ENCODE measurements at regions of chr10 and their contacts with region 1.

Region 1: DNA sequence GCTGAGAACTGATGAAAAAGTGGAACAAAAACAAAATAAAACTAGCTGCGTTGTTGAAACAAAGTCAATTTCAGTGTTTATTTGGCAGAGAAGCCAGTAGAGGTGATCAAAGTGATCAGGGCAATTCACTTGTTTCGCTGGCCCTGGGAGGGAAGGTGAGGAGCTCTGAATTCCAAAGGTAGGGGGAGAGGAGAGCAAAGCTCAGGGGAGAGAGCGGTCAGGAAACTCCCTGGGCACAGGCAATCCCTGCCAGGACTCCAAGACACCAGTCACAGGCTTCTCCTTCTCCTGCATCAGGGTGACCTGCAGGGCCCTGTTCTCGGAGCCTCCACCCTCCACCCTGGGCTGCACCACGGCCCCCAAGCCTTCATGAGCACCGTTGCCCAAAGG is 6.8 kb upstream of the KIAA1217 start:
- DNase-seq: peak; percentile 67
- ATAC-seq: peak; percentile 93
- H3K4me3 ChIP-seq: peak overlapping the region; percentile 39 to 67 (median 48); a peak in 5 of 6 replicates
- H3K27ac ChIP-seq: no peak overlapping the region
- H3K4me1 ChIP-seq: peaks cover 38% of the 10 kb centered on the region
- H3K27me3 ChIP-seq: no peaks in the 10 kb centered on the region
- CTCF ChIP-seq: no peak
- EP300 ChIP-seq: no peak
- POLR2A ChIP-seq: peak in 1 of 2 experiments; percentile 45; a peak in 1 of 4 replicates
- RAD21 ChIP-seq: no peak

Region 2: GRCh38 chr10:24360282-24361127 is 158.3 kb after region 1 on chr10:
- CTCF ChIA-PET with region 1: no interaction called
- POLR2A ChIA-PET with region 1: no interaction called
- in situ Hi-C with region 1: no loop called
- intact Hi-C with region 1: loop called (anchors 5 kb)
- DNase-seq: peak; percentile 50
- ATAC-seq: peak; percentile 82
- H3K4me3 ChIP-seq: no peak overlapping the region
- H3K27ac ChIP-seq: no peak overlapping the region
- H3K4me1 ChIP-seq: peaks cover 8% of the 10 kb centered on the region
- H3K27me3 ChIP-seq: no peaks in the 10 kb centered on the region
- CTCF ChIP-seq: peak; percentile 78
- EP300 ChIP-seq: no peak
- POLR2A ChIP-seq: no peak
- RAD21 ChIP-seq: peak; percentile 36; the same call in 1 of the 2 replicates

Measured in HepG2 (cell line).